CD4-positive, alpha-beta memory T cell (primary cell): ENCODE measurements at regions of chr2 and their contacts with region 1.

Region 1: GRCh38 chr2:64523666-64524603 is at the start of gene AFTPH:
- DNase-seq: peak; percentile 98 to 100 (median 99)
- H3K4me3 ChIP-seq: peak within 1 kb of the TSS; percentile 94 to 95
- H3K4me3 Mint-ChIP-seq: peak within 1 kb of the TSS; percentile 99 to 100 (median 99)
- H3K27ac ChIP-seq: peak within 1 kb of the TSS; percentile 96
- H3K27ac Mint-ChIP-seq: peak within 1 kb of the TSS; percentile 97 to 99 (median 99)
- H3K4me1 ChIP-seq: peaks cover 40% of the 10 kb centered on the region
- H3K4me1 Mint-ChIP-seq: peaks cover 32 to 50% (median 39%) of the 10 kb centered on the region in 4 donors
- H3K27me3 ChIP-seq: no peaks in the 10 kb centered on the region
- H3K27me3 Mint-ChIP-seq: peaks cover 0 to 2% of the 10 kb centered on the region in 2 donors
- total RNA-seq, gene AFTPH: 48.3 to 48.9 TPM

Region 2: GRCh38 chr2:63841254-63842022 is 682.5 kb before region 1 on chr2 and contains the start of gene UGP2:
- CTCF ChIA-PET with region 1: interaction called, 3 read pairs
- POLR2A ChIA-PET with region 1: interaction called, 13 read pairs
- intact Hi-C with region 1: loop called (anchors 1 kb)
- DNase-seq: peak; percentile 82 to 94 (median 83)
- H3K4me3 ChIP-seq: peak within 1 kb of the TSS; percentile 63 to 85
- H3K4me3 Mint-ChIP-seq: peak within 1 kb of the TSS; percentile 96 to 100 (median 98)
- H3K27ac ChIP-seq: peak within 1 kb of the TSS; percentile 71
- H3K27ac Mint-ChIP-seq: peak within 1 kb of the TSS; percentile 95 to 100 (median 97)
- H3K4me1 ChIP-seq: peaks cover 44% of the 10 kb centered on the region
- H3K4me1 Mint-ChIP-seq: peaks cover 38 to 63% (median 51%) of the 10 kb centered on the region in 4 donors
- H3K27me3 ChIP-seq: no peaks in the 10 kb centered on the region
- H3K27me3 Mint-ChIP-seq: no peaks in the 10 kb centered on the region
- total RNA-seq, gene UGP2: 77.6 to 92.7 TPM

Region 3: DNA sequence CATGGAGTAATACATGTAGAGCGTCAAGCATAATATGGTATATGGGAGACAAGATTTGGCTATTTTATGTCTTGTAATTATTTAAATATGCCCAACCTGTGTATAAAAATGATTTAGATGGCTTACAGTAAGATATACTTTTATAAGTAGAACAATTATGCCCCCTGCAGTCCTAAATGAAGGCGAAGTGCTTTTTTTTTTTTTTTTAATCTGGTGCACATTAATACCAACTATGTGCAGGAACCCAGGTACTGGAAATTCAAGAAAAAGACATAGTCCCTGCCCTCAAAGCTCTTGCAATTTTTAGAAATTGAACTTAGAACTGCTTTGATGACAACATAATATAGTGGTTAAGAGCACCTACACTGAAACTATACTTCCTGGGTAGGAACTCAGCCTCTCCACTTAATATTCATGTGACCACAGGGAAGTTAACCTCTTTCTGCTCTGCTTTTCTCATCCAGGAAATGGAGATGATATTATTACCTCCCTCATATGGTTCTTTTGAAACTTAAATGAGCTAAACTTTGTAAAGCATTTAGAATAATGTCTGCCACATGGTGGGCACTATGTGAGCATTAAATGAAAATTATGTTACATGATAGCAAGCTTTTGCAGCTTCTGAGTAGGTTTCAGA is 38.3 kb after region 1 on chr2:
- CTCF ChIA-PET with region 1: interaction called, 128 read pairs
- POLR2A ChIA-PET with region 1: interaction called, 42 read pairs
- intact Hi-C with region 1: loop called (anchors 1 kb)
- DNase-seq: peak in 4 of 5 donors; percentile 42 to 52 (median 46)
- H3K4me3 ChIP-seq: no peak overlapping the region
- H3K4me3 Mint-ChIP-seq: peak overlapping the region in 1 of 8 donors; percentile 25
- H3K27ac ChIP-seq: no peak overlapping the region
- H3K27ac Mint-ChIP-seq: peak overlapping the region in 3 of 7 donors; percentile 10 to 60 (median 43)
- H3K4me1 ChIP-seq: peaks cover 22% of the 10 kb centered on the region
- H3K4me1 Mint-ChIP-seq: peaks cover 17 to 43% (median 25%) of the 10 kb centered on the region in 4 donors
- H3K27me3 ChIP-seq: no peaks in the 10 kb centered on the region
- H3K27me3 Mint-ChIP-seq: no peaks in the 10 kb centered on the region

Region 4: DNA sequence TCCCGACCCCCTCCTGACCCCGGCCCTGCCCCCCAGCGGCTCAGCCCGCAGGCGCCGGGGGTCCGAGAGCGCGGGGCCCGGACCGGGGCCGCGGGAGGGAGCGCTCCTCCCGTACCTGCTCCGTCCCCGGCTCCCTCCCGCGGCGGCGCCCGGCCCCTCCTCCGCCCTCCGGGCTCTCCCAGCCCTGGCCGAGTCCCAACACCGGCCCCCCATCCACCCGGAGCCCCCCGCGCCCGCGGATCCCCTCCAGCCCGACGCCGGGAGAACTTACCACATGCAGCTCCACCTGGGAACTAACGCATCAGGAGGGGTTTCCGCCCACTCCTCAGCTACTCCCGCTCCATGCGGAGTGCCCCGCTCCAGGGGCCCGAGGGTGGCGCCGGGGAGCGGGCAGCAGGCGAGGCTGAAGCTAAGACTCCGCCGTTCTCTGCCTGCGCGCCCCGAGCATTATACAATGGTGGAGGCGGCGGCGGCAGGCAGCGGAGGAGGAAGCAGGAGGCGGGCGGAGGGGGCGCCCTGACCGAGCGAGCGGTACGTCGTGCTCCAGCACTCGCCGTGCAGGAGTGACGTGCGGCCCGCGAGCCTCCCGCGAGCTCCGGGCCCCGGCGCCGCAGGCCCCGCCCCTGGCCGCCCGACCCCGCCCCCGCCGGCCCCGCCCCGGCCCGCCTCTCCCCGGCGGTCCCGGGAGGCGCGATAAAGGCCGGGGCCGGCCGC is 129.6 kb after region 1 on chr2 and contains the start of gene SERTAD2:
- CTCF ChIA-PET with region 1: interaction called, 20 read pairs
- POLR2A ChIA-PET with region 1: interaction called, 55 read pairs
- intact Hi-C with region 1: loop called (anchors 1 kb)
- DNase-seq: peak; percentile 84 to 89 (median 88)
- H3K4me3 ChIP-seq: peak within 1 kb of the TSS; percentile 70 to 83
- H3K4me3 Mint-ChIP-seq: peak within 1 kb of the TSS; percentile 90 to 99 (median 92)
- H3K27ac ChIP-seq: peak within 1 kb of the TSS; percentile 83
- H3K27ac Mint-ChIP-seq: peak within 1 kb of the TSS; percentile 90 to 98 (median 95)
- H3K4me1 ChIP-seq: peaks cover 53% of the 10 kb centered on the region
- H3K4me1 Mint-ChIP-seq: peaks cover 34 to 63% (median 50%) of the 10 kb centered on the region in 4 donors
- H3K27me3 ChIP-seq: no peaks in the 10 kb centered on the region
- H3K27me3 Mint-ChIP-seq: no peaks in the 10 kb centered on the region
- total RNA-seq, gene SERTAD2: 23.5 to 24.6 TPM

Region 5: DNA sequence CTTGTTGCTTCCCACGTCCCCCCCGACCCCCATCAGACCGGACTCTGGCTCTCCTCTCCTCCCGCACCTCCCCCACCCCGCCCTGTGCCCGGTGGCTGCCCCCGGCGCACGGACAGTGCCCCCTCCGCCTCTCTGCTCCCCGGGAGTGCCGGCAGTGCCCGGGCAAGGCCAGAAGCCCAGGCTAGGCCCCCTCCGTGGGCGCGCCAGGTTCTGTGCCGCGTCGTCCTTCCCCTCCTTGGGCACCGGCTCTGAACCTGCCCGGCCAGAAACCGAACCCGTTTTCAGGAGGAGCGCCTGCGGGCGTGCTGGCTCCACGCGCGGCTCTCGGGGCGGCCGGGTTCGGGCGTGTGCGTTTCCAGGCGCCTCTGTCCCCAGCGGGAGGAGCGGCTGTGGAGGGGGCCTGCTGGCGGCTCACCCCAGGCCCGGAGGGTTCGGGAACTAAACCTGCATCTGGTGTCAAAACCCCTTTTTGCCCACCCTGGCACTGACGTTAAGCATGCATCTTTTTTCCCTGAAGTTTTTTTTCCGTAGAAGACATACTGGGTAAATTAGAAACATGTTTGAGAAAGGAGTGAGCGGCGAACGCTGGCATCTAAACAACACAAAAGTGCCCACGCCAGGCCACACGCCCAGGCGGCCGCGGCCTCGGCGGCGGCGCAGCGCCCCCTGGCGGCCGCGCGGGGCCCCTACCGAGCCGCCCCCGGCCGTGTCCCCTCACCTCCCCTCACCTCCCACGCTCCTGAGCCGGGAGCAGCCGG is 341.3 kb after region 1 on chr2:
- CTCF ChIA-PET with region 1: interaction called, 37 read pairs
- POLR2A ChIA-PET with region 1: interaction called, 11 read pairs
- intact Hi-C with region 1: loop called (anchors 1 kb)
- DNase-seq: peak in 4 of 5 donors; percentile 69 to 75 (median 70)
- H3K4me3 ChIP-seq: peak overlapping the region in 1 of 2 donors; percentile 60
- H3K4me3 Mint-ChIP-seq: peak overlapping the region; percentile 79 to 88 (median 82)
- H3K27ac ChIP-seq: no peak overlapping the region
- H3K27ac Mint-ChIP-seq: peak overlapping the region in 1 of 7 donors; percentile 64
- H3K4me1 ChIP-seq: peaks cover 10% of the 10 kb centered on the region
- H3K4me1 Mint-ChIP-seq: peaks cover 0 to 3% (median under 1%) of the 10 kb centered on the region in 4 donors
- H3K27me3 ChIP-seq: no peaks in the 10 kb centered on the region
- H3K27me3 Mint-ChIP-seq: peaks cover 2 to 3% of the 10 kb centered on the region in 2 donors

Region 6: GRCh38 chr2:65227425-65228262 is 703.7 kb after region 1 on chr2 and contains the start of gene ACTR2:
- CTCF ChIA-PET with region 1: interaction called, 3 read pairs
- POLR2A ChIA-PET with region 1: interaction called, 13 read pairs
- intact Hi-C with region 1: loop called (anchors 1 kb)
- DNase-seq: peak; percentile 93 to 97 (median 95)
- H3K4me3 ChIP-seq: peak within 1 kb of the TSS; percentile 96 to 97
- H3K4me3 Mint-ChIP-seq: peak within 1 kb of the TSS; percentile 97 to 100 (median 99)
- H3K27ac ChIP-seq: peak within 1 kb of the TSS; percentile 100
- H3K27ac Mint-ChIP-seq: peak within 1 kb of the TSS; percentile 99 to 100 (median 99)
- H3K4me1 ChIP-seq: peaks cover 50% of the 10 kb centered on the region
- H3K4me1 Mint-ChIP-seq: peaks cover 23 to 58% (median 35%) of the 10 kb centered on the region in 4 donors
- H3K27me3 ChIP-seq: no peaks in the 10 kb centered on the region
- H3K27me3 Mint-ChIP-seq: no peaks in the 10 kb centered on the region
- total RNA-seq, gene ACTR2: 298 to 312 TPM